ENCODE measurements at regions of chr21 and their contacts with region 1.

Region 1: DNA sequence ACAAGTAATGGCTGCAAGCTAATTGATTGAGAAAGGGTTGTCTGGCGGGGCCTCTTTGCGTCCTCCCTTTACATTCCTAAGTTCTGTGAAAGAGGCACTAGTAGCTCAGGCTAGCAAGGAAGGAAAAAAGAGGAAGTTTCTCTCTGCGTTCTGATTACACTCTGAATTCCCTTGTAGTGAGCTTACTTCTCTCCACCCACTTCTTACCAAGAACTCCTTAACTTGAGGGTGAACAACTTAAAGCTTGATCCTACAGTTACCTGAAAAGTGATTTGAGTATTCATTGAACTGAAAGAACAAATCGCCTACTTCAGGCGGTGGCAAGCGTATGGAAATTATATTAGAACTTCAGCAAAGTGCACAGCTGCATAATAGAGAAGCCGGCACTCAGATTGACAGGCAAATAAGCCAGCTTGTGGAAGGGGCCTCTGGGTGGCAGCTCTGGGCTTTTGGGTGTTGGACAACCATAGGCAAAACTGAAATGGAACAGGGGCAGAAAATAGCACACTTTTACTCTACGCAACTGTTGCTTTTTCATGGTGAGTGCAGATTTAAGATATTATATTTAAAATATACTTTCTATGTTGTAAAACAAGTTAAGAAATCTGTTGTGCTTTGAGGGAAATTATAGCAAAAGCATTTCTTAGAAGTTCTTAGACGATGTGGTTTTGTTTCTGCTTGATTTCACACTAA is 464.5 kb downstream of the USP25 start:
- DNase-seq: peak; percentile 65
- H3K4me3 Mint-ChIP-seq: peak overlapping the region; percentile 68
- H3K27ac Mint-ChIP-seq: peak overlapping the region; percentile 92
- H3K4me1 Mint-ChIP-seq: peaks cover 6% of the 10 kb centered on the region
- H3K27me3 Mint-ChIP-seq: no peaks in the 10 kb centered on the region
- CTCF ChIP-seq: no peak

Region 2: GRCh38 chr21:16082038-16082816 is 112.0 kb before region 1 on chr21:
- CTCF ChIA-PET with region 1: interaction called, 5 read pairs
- POLR2A ChIA-PET with region 1: interaction called, 8 read pairs
- intact Hi-C with region 1: loop called (anchors 10 kb)
- DNase-seq: peak; percentile 17
- H3K4me3 Mint-ChIP-seq: no peak overlapping the region
- H3K27ac Mint-ChIP-seq: no peak overlapping the region
- H3K4me1 Mint-ChIP-seq: peaks cover 7% of the 10 kb centered on the region
- H3K27me3 Mint-ChIP-seq: peaks cover 11% of the 10 kb centered on the region
- CTCF ChIP-seq: peak; percentile 29

Region 3: DNA sequence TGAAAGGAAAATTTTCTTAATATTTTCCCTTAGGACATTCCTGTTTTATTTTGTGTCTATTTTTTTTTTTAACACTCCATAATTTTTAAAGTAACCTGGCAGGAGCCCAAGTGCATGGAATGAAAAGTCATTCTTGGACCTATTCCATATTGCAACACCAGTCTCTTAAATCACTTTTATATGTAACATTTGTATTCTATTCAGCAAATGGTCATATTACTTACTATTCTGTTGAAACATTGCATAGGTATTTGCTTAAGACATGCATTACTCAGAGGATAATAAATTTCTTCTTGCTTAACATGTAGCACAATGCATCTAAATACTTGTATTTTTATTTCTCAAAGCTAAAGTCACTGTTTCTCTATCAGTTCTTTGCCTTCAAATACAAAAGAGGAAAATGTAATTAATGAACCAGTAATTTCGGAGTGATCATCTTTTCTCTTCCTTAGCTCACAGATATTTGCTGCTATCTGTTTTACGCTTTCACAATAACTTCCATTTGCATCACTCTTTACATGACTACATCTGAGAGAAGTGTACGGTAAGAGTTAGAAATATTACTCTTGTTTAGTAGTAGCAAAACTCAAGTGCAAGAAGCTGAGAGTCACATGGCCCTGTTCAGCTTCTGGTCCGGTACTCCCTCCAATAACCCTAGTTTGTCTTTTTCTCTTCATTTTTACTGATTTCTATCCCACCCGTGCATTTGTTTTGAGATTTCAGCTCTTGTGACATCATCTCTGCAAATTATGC is 69.7 kb before region 1 on chr21:
- CTCF ChIA-PET with region 1: interaction called, 3 read pairs
- POLR2A ChIA-PET with region 1: interaction called, 21 read pairs
- intact Hi-C with region 1: loop called (anchors 1 kb)
- DNase-seq: peak; percentile 93
- H3K4me3 Mint-ChIP-seq: peak overlapping the region; percentile 53
- H3K27ac Mint-ChIP-seq: peak overlapping the region; percentile 79
- H3K4me1 Mint-ChIP-seq: peaks cover 6% of the 10 kb centered on the region
- H3K27me3 Mint-ChIP-seq: peaks cover 7% of the 10 kb centered on the region
- CTCF ChIP-seq: no peak

Region 4: DNA sequence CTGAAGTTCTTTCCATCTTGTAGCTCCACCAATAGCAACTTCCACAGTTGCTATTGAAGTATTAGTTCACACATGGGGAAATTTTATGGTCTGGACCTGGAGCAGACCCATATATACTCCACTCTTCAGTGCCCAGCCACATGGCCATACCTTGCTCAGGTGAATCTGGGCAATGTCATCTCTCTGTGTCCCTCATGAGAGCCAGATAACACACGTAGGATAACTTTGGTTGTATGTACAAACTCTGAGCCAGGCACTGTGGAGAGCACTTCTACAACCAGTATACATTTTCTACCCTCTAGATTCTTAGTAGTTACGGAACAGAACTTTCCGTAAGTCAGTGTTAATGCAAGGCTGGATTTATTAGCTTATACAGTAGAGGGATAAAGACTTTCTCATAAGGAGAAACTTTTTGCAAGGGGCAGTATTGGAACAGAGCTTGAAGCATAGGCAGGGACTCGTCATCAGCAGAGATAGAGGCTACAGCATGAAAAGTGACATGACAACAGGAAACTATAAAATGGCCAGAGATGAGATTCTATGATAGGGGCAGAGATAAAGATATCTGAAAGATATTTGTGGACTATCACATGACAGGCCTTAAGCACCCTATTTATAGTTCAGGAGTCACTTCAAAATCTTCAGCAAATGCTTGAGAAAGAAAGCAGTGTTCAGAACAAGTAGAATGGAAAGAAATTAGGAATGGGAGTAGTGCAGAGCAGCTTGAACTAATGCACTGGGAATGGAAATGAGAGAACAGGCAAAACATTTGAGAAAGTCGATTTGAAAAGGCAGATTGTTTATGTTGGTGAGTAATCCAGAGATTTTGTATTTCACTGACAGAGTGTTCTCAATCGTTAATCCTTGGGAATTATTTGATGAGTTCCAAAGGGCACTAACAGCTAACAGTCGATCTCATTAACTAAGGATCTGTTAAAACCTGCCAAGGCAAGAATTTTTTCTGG is 17.4 kb after region 1 on chr21:
- CTCF ChIA-PET with region 1: interaction called, 5 read pairs
- POLR2A ChIA-PET with region 1: interaction called, 17 read pairs
- intact Hi-C with region 1: no loop called
- DNase-seq: no peak
- H3K4me3 Mint-ChIP-seq: no peak overlapping the region
- H3K27ac Mint-ChIP-seq: peak overlapping the region; percentile 2
- H3K4me1 Mint-ChIP-seq: peaks cover 8% of the 10 kb centered on the region
- H3K27me3 Mint-ChIP-seq: peaks cover 74% of the 10 kb centered on the region
- CTCF ChIP-seq: no peak

Region 5: GRCh38 chr21:16294128-16294527 is 99.9 kb after region 1 on chr21:
- CTCF ChIA-PET with region 1: no interaction called
- POLR2A ChIA-PET with region 1: no interaction called
- intact Hi-C with region 1: no loop called
- DNase-seq: no peak
- H3K4me3 Mint-ChIP-seq: no peak overlapping the region
- H3K27ac Mint-ChIP-seq: no peak overlapping the region
- H3K4me1 Mint-ChIP-seq: no peaks in the 10 kb centered on the region
- H3K27me3 Mint-ChIP-seq: peaks cover 53% of the 10 kb centered on the region
- CTCF ChIP-seq: no peak

Region 6: GRCh38 chr21:16324630-16325029 is 130.4 kb after region 1 on chr21:
- CTCF ChIA-PET with region 1: interaction called, 7 read pairs
- POLR2A ChIA-PET with region 1: no interaction called
- intact Hi-C with region 1: loop called (anchors 5 kb)
- DNase-seq: no peak
- H3K4me3 Mint-ChIP-seq: no peak overlapping the region
- H3K27ac Mint-ChIP-seq: no peak overlapping the region
- H3K4me1 Mint-ChIP-seq: no peaks in the 10 kb centered on the region
- H3K27me3 Mint-ChIP-seq: peaks cover 9% of the 10 kb centered on the region
- CTCF ChIP-seq: no peak